ENCODE measurements at regions of chr1 and their contacts with region 1.

Region 1: GRCh38 chr1:23559136-23559984 is at the start of gene ID3:
- DNase-seq: peak; percentile 54 to 95
- ATAC-seq: peak; percentile 24 to 47
- H3K4me3 ChIP-seq: peak within 1 kb of the TSS; percentile 92
- H3K27ac ChIP-seq: peak within 1 kb of the TSS; percentile 96 to 98
- H3K4me1 ChIP-seq: peaks cover 61% of the 10 kb centered on the region
- CTCF ChIP-seq: no peak
- EP300 ChIP-seq: no peak
- POLR2A ChIP-seq: peak; percentile 96
- RAD21 ChIP-seq: no peak; a peak in 2 of 5 replicates
- polyA plus RNA-seq, gene ID3: 171 and 193 TPM in 2 replicates

Region 2: GRCh38 chr1:23539698-23540266 is 19.6 kb before region 1 on chr1:
- CTCF ChIA-PET with region 1: interaction called, 35 read pairs
- POLR2A ChIA-PET with region 1: interaction called, 4 read pairs
- DNase-seq: peak; percentile 91 to 92
- ATAC-seq: peak; percentile 93 to 98
- H3K4me3 ChIP-seq: no peak overlapping the region
- H3K27ac ChIP-seq: peak overlapping the region; percentile 56 to 77
- H3K4me1 ChIP-seq: peaks cover 15% of the 10 kb centered on the region
- CTCF ChIP-seq: peak; percentile 81
- EP300 ChIP-seq: no peak
- POLR2A ChIP-seq: no peak
- RAD21 ChIP-seq: peak; percentile 92 to 95

Region 3: GRCh38 chr1:23585447-23586015 is 26.2 kb after region 1 on chr1:
- CTCF ChIA-PET with region 1: interaction called, 6 read pairs
- POLR2A ChIA-PET with region 1: interaction called, 53 read pairs
- DNase-seq: peak; percentile 81 to 96
- ATAC-seq: peak; percentile 92 to 93
- H3K4me3 ChIP-seq: no peak overlapping the region
- H3K27ac ChIP-seq: peak overlapping the region; percentile 96 to 100
- H3K4me1 ChIP-seq: peaks cover 79% of the 10 kb centered on the region
- CTCF ChIP-seq: no peak
- EP300 ChIP-seq: peak; percentile 99
- POLR2A ChIP-seq: no peak
- RAD21 ChIP-seq: peak; percentile 36 to 63

Region 4: GRCh38 chr1:23598424-23598823 is 39.1 kb after region 1 on chr1:
- CTCF ChIA-PET with region 1: interaction called, 5 read pairs
- POLR2A ChIA-PET with region 1: interaction called, 53 read pairs
- DNase-seq: no peak
- ATAC-seq: no peak
- H3K4me3 ChIP-seq: no peak overlapping the region
- H3K27ac ChIP-seq: peak overlapping the region; percentile 96 to 100
- H3K4me1 ChIP-seq: peaks cover 62% of the 10 kb centered on the region
- CTCF ChIP-seq: no peak
- EP300 ChIP-seq: no peak
- POLR2A ChIP-seq: no peak
- RAD21 ChIP-seq: no peak

Measured in A549 (cell line).